ENCODE measurements at regions of chr18 and their contacts with region 1.

Region 1: DNA sequence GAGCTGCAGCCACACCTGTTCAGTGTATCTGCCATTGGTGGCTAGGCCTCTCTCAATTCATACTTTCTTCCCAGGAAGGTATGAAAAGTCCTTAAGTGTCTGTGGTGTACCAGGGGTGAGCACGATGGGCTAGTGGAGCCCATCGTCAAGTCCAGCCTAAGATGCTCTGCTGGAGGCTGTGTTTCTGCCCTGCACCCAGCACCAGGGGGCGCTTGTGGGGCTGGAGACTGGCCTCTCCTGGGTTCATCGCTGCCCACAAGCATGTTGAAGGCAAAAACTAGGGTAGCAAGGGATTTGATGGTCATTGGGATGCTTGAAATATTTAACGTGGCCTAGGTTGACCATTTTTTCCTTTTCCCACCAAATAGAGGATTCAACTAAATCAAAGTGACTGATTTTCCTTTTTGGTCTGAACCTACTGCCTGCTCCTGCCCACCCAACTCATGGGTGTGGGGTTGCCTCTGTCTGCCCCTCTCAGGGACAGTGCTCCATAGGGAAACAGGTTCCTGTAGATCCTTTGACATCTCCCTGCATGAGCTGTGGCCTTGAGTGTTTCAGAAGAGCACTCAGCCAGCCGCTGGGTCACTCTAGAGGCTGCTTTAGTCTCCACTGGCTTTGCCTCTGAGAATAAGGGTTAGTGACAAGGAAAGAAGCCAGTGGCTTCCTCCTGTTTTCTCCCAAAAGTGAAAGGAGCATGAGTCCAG is 59.0 kb downstream of the TPGS2 start:
- DNase-seq: peak; percentile 52
- ATAC-seq: no peak
- H3K4me3 Mint-ChIP-seq: no peak overlapping the region
- H3K27ac Mint-ChIP-seq: no peak overlapping the region
- H3K4me1 Mint-ChIP-seq: peaks cover 7% of the 10 kb centered on the region
- H3K27me3 Mint-ChIP-seq: no peaks in the 10 kb centered on the region

Region 2: DNA sequence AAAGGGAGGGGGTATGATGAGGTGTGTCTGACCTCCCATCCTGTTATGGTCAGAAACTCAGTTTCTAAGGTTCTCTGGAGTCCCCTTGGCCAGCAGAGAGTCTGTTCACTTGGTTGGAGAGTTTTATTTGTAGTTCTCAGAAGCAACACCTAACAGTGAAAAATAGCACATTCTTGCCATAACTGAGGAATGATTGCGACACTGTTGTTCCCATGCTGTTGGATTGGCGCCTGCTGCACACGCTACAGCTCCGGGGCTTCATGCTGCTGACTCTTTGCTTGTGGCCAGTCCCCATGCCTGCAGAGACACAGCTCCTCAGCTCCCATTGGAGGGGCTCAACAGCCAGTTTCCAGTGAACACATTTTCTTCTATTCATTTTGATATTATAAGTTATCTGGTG is 16.9 kb after region 1 on chr18:
- CTCF ChIA-PET with region 1: no interaction called
- POLR2A ChIA-PET with region 1: no interaction called
- intact Hi-C with region 1: no loop called
- DNase-seq: no peak
- ATAC-seq: no peak
- H3K4me3 Mint-ChIP-seq: no peak overlapping the region
- H3K27ac Mint-ChIP-seq: no peak overlapping the region
- H3K4me1 Mint-ChIP-seq: no peaks in the 10 kb centered on the region
- H3K27me3 Mint-ChIP-seq: no peaks in the 10 kb centered on the region

Region 3: DNA sequence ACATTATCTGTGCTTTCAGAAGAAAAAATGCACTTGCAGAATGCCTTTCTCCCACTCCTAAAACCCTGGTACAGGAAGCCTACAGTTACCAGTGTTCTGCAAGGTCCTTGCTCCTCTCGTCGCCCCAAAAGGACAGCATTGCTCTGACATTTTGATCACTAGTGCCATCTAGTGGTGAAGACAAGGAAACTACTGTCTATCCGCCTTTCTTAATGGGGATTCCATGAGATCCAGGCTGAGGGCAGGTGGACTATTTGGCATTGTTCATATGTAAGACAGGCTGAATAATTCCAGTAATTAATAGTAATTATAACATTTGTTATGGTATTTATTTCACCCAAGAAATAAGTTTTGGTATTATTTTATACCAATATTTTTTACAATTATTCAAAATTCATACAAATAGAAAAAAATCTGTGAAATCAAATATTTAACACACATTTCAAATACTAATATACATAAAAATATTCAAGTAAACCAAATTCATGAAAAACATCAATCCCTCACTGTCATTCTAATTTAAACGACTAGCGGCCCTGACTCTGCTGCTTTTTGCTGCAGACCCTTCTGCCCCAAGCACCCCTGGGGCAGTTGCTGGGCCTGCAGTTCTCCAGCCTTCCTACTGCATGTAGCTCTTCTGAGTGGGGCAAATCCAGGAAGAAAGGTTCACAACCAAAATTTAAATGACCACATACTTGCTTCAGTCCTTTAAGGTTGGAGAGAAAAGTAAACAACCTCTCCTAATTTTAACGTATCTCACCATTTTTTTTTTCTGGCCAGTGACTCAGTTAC is 40.0 kb after region 1 on chr18:
- CTCF ChIA-PET with region 1: no interaction called
- POLR2A ChIA-PET with region 1: no interaction called
- intact Hi-C with region 1: loop called in 1 of 2 experiments (anchors 2 kb)
- DNase-seq: peak; percentile 38
- ATAC-seq: peak; percentile 94
- H3K4me3 Mint-ChIP-seq: no peak overlapping the region
- H3K27ac Mint-ChIP-seq: no peak overlapping the region
- H3K4me1 Mint-ChIP-seq: peaks cover 14% of the 10 kb centered on the region
- H3K27me3 Mint-ChIP-seq: no peaks in the 10 kb centered on the region

Measured in activated CD4-positive, alpha-beta T cell treated with anti-CD3 and anti-CD28 coated beads for 36 hours (primary cell).